ENCODE measurements at regions of chr1 and their contacts with region 1.

Region 1: DNA sequence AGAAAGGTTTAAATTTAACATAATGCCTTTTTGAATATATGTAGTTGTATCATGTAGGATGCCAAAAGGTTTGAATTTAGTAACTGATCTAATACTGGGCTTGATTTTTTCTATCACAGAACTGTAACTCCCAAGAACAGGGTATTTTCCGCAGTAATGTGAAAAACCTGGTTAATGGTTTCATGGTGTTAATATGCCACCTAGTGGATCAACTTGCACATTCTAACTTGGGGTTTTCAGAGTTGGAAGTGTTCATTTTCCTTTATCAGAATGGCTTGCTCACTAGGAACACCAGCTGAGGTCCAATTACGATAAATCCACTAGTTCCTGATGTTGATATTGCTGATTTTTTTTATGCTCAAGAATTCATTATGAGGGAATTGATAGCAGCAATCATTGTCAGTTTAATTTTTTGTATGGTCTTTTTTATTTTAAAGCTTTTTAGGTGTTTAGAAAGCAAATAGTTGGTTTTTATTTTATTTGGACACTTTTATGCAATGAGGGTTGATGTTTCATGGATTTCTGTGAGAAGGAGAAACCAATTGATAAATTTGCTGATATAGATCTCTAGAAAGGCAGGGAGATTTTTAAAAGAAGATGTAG is 157.2 kb downstream of the PLA2G4A start:
- DNase-seq: peak in 4 of 5 donors; percentile 11 to 41 (median 30)
- H3K4me3 ChIP-seq: no peak overlapping the region
- H3K4me3 Mint-ChIP-seq: no peak overlapping the region
- H3K27ac ChIP-seq: no peak overlapping the region
- H3K27ac Mint-ChIP-seq: no peak overlapping the region
- H3K4me1 ChIP-seq: no peaks in the 10 kb centered on the region
- H3K4me1 Mint-ChIP-seq: no peaks in the 10 kb centered on the region
- H3K27me3 ChIP-seq: no peaks in the 10 kb centered on the region
- H3K27me3 Mint-ChIP-seq: peaks cover 0 to 2% of the 10 kb centered on the region in 2 donors

Region 2: DNA sequence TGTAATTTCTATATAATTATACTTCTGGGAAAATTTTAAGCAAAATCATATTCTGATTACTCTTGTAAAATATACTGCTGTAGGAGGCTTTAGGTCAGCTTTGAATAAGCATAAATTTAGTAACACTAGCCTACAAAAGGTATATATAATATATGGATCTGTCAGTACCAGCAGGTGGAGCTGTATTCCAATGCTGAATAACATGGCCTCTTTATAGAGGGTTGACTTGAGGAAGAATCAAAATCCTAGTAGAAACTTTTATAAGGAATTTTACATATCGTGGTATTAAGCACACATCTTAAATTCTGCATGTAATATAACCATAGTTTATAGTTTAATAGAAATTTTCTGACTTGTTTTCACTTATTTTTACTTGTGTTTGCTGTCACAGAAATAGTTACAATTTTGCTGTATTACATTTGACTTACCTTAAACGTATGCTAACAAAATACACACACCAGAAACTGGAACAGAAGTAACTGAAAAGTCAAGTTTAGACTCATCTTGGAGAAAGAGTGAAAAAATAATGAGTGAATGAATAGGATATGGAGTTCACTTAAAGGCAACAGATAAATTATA is 1172.5 kb before region 1 on chr1:
- CTCF ChIA-PET with region 1: no interaction called
- POLR2A ChIA-PET with region 1: no interaction called
- intact Hi-C with region 1: loop called (anchors 5 kb)
- DNase-seq: peak in 3 of 5 donors; percentile 1 to 6 (median 4)
- H3K4me3 ChIP-seq: no peak overlapping the region
- H3K4me3 Mint-ChIP-seq: no peak overlapping the region
- H3K27ac ChIP-seq: no peak overlapping the region
- H3K27ac Mint-ChIP-seq: no peak overlapping the region
- H3K4me1 ChIP-seq: no peaks in the 10 kb centered on the region
- H3K4me1 Mint-ChIP-seq: peaks cover 0 to 3% (median 1%) of the 10 kb centered on the region in 4 donors
- H3K27me3 ChIP-seq: no peaks in the 10 kb centered on the region
- H3K27me3 Mint-ChIP-seq: peaks cover 0 to 4% of the 10 kb centered on the region in 2 donors

Region 3: DNA sequence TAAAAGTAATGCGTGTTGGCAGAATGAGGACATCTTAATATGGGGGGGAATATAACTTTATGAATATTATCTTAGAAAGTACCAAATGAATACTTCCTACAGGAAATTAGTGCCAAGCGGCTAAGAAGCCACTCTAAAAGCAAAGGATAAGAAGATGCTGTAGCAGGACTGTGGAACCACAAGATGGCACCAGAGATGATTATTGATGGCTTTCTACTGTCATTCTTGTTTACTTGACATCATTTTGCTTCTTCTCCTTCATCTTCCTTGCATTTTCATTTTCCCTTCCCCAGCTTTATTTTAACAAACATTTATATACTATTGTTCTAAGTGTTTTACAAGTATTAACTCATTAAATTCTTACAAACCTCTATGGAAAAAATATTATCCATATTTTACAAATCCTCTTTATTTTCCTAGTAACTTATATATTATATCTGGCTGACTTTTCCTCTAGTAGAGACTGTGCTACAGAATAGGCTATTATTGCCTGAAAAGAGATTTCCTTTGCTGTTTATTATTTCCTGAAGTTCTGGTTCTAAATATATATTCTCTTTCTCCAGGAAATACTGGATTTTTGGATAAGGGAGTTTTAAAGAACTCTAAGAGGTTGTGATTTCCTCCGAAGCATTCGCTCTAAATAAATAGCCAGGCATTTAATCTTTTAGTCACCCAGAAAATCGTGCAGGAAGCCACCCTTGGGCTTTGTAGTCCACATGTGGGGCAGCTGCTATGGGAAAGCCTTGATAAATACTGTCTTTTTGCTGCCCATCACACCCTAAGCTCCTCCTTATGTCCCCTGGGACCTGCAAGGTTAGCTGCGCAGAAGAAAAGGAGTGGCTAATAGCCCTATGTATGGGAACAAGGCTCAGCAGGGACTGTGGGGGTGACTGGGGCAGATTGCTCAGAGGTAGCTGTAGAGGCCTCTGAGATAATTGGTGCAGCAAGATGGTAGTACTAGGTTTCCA is 680.7 kb before region 1 on chr1:
- CTCF ChIA-PET with region 1: no interaction called
- POLR2A ChIA-PET with region 1: no interaction called
- intact Hi-C with region 1: loop called (anchors 1 kb)
- DNase-seq: peak in 3 of 5 donors; percentile 25 to 42 (median 34)
- H3K4me3 ChIP-seq: no peak overlapping the region
- H3K4me3 Mint-ChIP-seq: peak overlapping the region in 3 of 8 donors; percentile 3 to 54 (median 37)
- H3K27ac ChIP-seq: no peak overlapping the region
- H3K27ac Mint-ChIP-seq: peak overlapping the region; percentile 53 to 91 (median 79)
- H3K4me1 ChIP-seq: peaks cover 79% of the 10 kb centered on the region
- H3K4me1 Mint-ChIP-seq: peaks cover 31 to 45% (median 39%) of the 10 kb centered on the region in 4 donors
- H3K27me3 ChIP-seq: no peaks in the 10 kb centered on the region
- H3K27me3 Mint-ChIP-seq: peaks cover 0 to 1% of the 10 kb centered on the region in 2 donors

Region 4: DNA sequence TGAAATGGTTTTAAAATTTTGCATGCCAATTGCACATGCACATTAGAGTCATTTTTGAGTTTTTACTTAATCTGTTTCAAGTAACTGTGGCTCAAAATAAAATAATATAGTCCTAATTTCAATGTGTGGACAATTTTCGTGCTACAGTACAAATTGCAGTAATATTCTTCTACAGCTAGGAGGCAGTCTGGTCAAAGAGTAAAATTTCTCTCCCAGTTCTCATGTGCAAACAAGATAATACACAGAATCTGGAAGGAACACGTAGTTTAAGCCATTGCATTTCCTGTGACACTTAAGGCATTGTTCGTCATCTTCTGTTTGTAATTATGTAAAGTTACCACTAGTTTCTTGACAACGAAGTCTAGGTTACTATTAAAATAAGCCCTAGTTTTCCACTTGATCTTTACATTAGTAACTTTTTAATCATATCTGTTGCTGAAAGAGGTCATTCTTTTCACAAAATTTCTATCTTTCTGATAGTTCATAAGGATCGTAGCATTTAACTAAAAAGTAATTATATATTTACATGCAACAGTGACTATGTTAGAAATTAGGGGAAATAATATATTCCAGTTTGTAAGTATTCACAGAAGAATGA is 581.4 kb before region 1 on chr1:
- CTCF ChIA-PET with region 1: interaction called, 3 read pairs
- POLR2A ChIA-PET with region 1: no interaction called
- intact Hi-C with region 1: loop called (anchors 1 kb)
- DNase-seq: peak in 4 of 5 donors; percentile 39 to 61 (median 48)
- H3K4me3 ChIP-seq: no peak overlapping the region
- H3K4me3 Mint-ChIP-seq: no peak overlapping the region
- H3K27ac ChIP-seq: no peak overlapping the region
- H3K27ac Mint-ChIP-seq: peak overlapping the region in 3 of 7 donors; percentile 39 to 68 (median 49)
- H3K4me1 ChIP-seq: no peaks in the 10 kb centered on the region
- H3K4me1 Mint-ChIP-seq: peaks cover 0 to 3% (median 1%) of the 10 kb centered on the region in 4 donors
- H3K27me3 ChIP-seq: no peaks in the 10 kb centered on the region
- H3K27me3 Mint-ChIP-seq: no peaks in the 10 kb centered on the region

Region 5: DNA sequence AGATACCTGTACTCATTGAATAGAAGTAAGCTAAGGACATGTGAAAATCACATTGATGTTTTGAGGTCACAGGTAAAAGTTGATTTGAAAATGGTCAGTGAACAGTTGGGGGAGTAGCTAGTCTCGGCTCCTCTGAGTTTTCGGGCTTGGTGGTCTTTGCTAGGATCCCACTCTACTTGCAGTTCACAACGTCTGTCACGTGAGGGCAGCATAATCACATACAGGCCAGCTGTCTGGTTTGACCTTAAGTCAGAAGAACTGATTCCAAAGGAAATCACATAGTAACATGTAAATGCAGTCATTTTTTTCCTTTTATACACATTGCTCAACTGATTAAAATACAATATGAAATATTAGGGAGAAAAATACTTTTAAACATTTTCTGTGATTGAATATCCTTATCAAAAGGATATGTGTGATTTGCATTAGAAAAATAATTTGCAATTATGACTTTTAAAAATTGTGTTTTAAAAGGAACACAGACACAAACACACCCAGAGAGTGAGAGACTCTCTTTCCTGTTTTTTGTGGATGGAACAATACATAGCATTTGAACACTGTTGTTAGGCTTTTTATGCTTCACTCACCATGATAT is 503.2 kb before region 1 on chr1:
- CTCF ChIA-PET with region 1: interaction called, 4 read pairs
- POLR2A ChIA-PET with region 1: no interaction called
- intact Hi-C with region 1: loop called (anchors 1 kb)
- DNase-seq: peak in 4 of 5 donors; percentile 1 to 30 (median 6)
- H3K4me3 ChIP-seq: no peak overlapping the region
- H3K4me3 Mint-ChIP-seq: no peak overlapping the region
- H3K27ac ChIP-seq: no peak overlapping the region
- H3K27ac Mint-ChIP-seq: no peak overlapping the region
- H3K4me1 ChIP-seq: no peaks in the 10 kb centered on the region
- H3K4me1 Mint-ChIP-seq: no peaks in the 10 kb centered on the region
- H3K27me3 ChIP-seq: no peaks in the 10 kb centered on the region
- H3K27me3 Mint-ChIP-seq: peaks cover 0 to 1% of the 10 kb centered on the region in 2 donors

Region 6: DNA sequence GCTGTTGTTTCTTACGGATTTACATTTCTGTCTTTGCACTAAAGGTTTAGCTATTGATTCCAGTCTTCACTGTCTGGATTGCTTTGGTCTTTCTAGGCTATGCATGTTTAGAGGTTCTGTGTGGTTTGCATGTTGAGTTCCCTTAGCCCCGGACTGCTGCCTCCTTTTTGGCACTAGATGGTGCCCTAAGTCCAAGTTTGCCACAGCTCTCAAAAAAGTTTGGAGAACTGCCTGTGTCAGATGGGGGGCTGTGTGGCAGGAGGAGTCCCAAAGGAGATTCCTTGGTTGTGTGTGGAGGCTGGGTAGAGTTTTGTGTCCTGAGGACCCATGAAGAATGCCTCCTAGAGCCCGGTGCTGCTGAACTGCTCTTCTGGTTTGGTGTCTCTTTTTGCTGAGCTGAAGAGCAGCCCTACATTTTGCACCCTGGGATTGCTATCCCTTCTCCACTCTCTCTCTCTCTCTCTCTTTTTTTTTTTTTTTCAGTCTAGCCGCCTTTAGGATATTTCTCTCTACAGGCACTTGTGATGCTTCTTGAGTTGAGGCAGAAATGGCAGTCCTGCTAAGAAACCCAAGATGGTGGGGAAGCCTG is 380.1 kb before region 1 on chr1:
- CTCF ChIA-PET with region 1: interaction called, 8 read pairs
- POLR2A ChIA-PET with region 1: no interaction called
- intact Hi-C with region 1: loop called (anchors 5 kb)
- DNase-seq: no peak
- H3K4me3 ChIP-seq: no peak overlapping the region
- H3K4me3 Mint-ChIP-seq: no peak overlapping the region
- H3K27ac ChIP-seq: no peak overlapping the region
- H3K27ac Mint-ChIP-seq: peak overlapping the region in 1 of 7 donors; percentile 9
- H3K4me1 ChIP-seq: no peaks in the 10 kb centered on the region
- H3K4me1 Mint-ChIP-seq: no peaks in the 10 kb centered on the region
- H3K27me3 ChIP-seq: no peaks in the 10 kb centered on the region
- H3K27me3 Mint-ChIP-seq: peaks cover 8 to 10% of the 10 kb centered on the region in 2 donors

Region 7: GRCh38 chr1:186884251-186884650 is 101.7 kb before region 1 on chr1:
- CTCF ChIA-PET with region 1: no interaction called
- POLR2A ChIA-PET with region 1: no interaction called
- intact Hi-C with region 1: no loop called
- DNase-seq: no peak
- H3K4me3 ChIP-seq: no peak overlapping the region
- H3K4me3 Mint-ChIP-seq: no peak overlapping the region
- H3K27ac ChIP-seq: no peak overlapping the region
- H3K27ac Mint-ChIP-seq: no peak overlapping the region
- H3K4me1 ChIP-seq: no peaks in the 10 kb centered on the region
- H3K4me1 Mint-ChIP-seq: no peaks in the 10 kb centered on the region
- H3K27me3 ChIP-seq: no peaks in the 10 kb centered on the region
- H3K27me3 Mint-ChIP-seq: peaks cover 0 to 4% of the 10 kb centered on the region in 2 donors

Region 8: DNA sequence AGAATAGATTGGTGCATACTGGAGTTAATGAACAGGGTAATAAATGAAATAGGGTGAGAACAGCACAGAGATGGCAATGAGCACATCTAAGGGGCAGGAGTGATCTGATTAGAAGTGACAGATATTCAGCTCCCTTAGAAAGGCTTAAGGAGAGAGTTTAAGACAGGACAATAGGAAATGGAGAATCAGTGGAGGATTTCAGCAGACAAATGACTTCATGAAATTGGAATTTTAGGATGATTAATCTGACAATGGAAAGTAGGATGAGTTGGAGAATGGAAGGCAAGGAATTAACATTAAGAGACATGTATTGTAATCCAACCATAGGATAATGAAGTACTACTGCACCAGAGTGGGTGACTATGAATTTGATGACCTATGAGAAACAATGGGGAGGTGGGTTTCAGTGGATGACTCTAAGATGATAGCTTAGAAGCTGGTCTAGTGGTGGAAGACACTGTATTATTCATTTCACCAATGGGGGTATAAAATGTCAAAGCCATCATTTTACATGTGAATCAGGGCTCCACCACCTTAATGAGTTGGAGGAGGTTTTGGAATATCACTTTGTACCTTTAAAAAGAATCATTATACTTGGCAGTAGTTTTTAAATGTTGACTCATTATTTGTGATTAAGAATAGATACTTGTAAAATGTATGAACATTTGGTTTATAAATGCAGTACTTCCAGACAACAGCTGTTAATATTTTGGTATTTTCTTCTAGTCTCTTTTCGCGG is 18.2 kb before region 1 on chr1:
- CTCF ChIA-PET with region 1: no interaction called
- POLR2A ChIA-PET with region 1: no interaction called
- intact Hi-C with region 1: no loop called
- DNase-seq: no peak
- H3K4me3 ChIP-seq: no peak overlapping the region
- H3K4me3 Mint-ChIP-seq: no peak overlapping the region
- H3K27ac ChIP-seq: no peak overlapping the region
- H3K27ac Mint-ChIP-seq: no peak overlapping the region
- H3K4me1 ChIP-seq: no peaks in the 10 kb centered on the region
- H3K4me1 Mint-ChIP-seq: no peaks in the 10 kb centered on the region
- H3K27me3 ChIP-seq: no peaks in the 10 kb centered on the region
- H3K27me3 Mint-ChIP-seq: peaks cover 0 to 4% of the 10 kb centered on the region in 2 donors